ENCODE measurements at regions of chr20 and their contacts with region 1.

Region 1: DNA sequence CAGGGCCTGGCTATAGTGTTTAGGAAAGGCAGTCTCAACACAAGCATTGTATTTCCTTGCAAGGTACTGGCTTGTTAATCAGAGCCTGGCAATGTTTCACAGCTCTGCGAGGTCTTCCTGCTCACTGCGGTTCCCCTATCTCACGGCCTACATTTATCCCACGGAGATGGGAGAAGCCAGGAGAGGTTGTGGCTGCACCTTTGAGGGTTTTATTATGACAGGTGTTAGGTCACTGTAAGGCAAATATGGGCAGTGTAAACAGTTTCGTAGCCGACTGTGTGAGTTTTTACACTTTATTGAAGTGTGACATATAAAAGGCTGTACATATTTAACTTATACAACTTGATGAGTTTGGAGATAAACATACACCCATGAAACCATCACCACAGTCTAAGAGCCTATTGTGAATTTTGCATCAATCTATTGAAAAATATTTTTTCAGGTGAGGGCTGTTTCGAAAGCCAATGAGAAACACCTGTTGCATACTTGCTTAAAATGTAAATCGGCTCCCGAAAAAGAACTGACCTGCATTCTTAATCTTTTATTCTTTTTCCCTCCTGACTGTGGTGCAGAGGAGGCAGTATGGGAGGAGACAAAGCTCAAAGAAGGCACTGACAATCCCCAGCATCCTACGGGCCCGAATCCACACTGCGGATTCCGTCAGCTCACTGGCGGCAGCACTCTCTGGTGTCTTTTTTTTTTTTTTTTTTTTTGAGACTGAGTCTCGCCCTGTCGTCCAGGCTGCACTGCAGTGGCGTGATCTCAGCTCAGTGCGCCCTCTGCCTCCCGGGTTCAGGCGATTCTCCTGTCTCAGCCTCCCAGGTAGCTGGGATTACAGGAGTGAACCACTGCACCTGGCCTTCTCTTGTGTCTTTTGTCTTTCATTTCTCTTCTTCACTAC is 7.5 kb upstream of the RBM38 start:
- DNase-seq: no peak
- ATAC-seq: no peak
- H3K4me3 ChIP-seq: no peak overlapping the region
- H3K27ac ChIP-seq: no peak overlapping the region
- H3K4me1 ChIP-seq: no peaks in the 10 kb centered on the region
- H3K27me3 ChIP-seq: no peaks in the 10 kb centered on the region

Region 2: GRCh38 chr20:57323034-57323433 is 60.7 kb before region 1 on chr20:
- intact Hi-C with region 1: no loop called
- DNase-seq: peak in 1 of 3 donors; percentile 24
- ATAC-seq: peak in 1 of 2 donors; percentile 42
- H3K4me3 ChIP-seq: no peak overlapping the region
- H3K27ac ChIP-seq: no peak overlapping the region
- H3K4me1 ChIP-seq: no peaks in the 10 kb centered on the region
- H3K27me3 ChIP-seq: no peaks in the 10 kb centered on the region

Region 3: GRCh38 chr20:57493091-57493615 is 109.5 kb after region 1 on chr20:
- intact Hi-C with region 1: loop called (anchors 1 to 5 kb)
- DNase-seq: no peak
- ATAC-seq: no peak
- H3K4me3 ChIP-seq: no peak overlapping the region
- H3K27ac ChIP-seq: peak overlapping the region; percentile 15
- H3K4me1 ChIP-seq: no peaks in the 10 kb centered on the region
- H3K27me3 ChIP-seq: no peaks in the 10 kb centered on the region

Region 4: DNA sequence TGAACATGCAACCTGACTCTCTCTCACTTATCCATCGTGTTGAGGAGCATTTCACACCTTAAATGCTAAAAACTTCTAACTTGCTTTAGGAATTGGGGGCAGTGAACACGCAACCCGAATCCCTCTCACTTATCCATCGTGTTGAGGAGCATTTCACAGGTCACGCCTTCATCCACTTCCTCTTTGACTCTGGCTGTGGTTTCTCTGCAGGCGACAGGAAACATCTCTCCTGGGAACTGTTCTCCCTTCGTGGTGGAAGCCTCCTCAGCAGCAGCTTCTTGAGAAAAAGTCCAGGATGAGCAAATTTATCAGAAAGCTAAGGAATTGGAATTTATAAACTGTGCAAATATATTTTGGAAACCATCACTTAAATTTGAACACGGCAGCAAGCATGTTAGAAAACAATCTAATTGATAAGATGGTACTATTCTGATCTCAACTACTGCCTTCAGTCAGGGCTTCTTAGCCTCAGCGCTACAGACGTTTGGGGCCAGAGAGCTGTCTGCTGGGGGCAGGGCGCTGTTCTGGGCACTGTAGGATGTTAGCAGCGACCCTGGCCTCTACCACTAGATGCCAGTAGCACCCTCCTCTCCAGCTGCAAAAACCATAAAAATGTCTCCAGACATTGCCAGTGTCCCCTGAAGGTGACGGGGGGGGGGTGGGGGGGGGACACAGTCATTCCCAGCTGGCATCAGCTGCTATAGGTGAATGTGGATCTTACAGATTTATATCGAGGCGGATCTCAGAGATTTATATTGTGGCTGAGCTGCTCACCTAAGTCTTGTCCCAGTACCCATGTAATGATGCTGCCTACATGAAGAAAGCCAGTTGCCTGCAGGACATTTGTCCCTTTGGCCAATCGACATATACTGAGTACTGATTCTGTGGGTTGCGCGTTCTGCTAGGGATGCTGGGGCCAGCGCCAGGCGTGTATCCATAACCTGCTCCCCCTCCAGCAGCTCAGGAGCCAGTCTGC is 115.0 kb after region 1 on chr20:
- intact Hi-C with region 1: loop called (anchors 1 to 5 kb)
- DNase-seq: peak in 2 of 3 donors; percentile 56 to 62
- ATAC-seq: peak; percentile 40 to 48
- H3K4me3 ChIP-seq: no peak overlapping the region
- H3K27ac ChIP-seq: no peak overlapping the region
- H3K4me1 ChIP-seq: no peaks in the 10 kb centered on the region
- H3K27me3 ChIP-seq: no peaks in the 10 kb centered on the region